OCI-LY7 (cell line): ENCODE measurements at regions of chr2 and their contacts with region 1.

Region 1: GRCh38 chr2:62334440-62335058 is 138.6 kb downstream of the B3GNT2 start:
- DNase-seq: no peak
- H3K4me3 ChIP-seq: no peak overlapping the region
- H3K27ac ChIP-seq: no peak overlapping the region
- H3K4me1 ChIP-seq: no peaks in the 10 kb centered on the region
- CTCF ChIP-seq: no peak

Region 2: GRCh38 chr2:61233581-61233980 is 1101.0 kb before region 1 on chr2:
- CTCF ChIA-PET with region 1: no interaction called
- POLR2A ChIA-PET with region 1: no interaction called
- intact Hi-C with region 1: no loop called
- DNase-seq: no peak
- H3K4me3 ChIP-seq: no peak overlapping the region
- H3K27ac ChIP-seq: no peak overlapping the region
- H3K4me1 ChIP-seq: no peaks in the 10 kb centered on the region
- CTCF ChIP-seq: no peak

Region 3: GRCh38 chr2:61943251-61943650 is 391.3 kb before region 1 on chr2:
- CTCF ChIA-PET with region 1: no interaction called
- POLR2A ChIA-PET with region 1: no interaction called
- intact Hi-C with region 1: no loop called
- DNase-seq: no peak
- H3K4me3 ChIP-seq: no peak overlapping the region
- H3K27ac ChIP-seq: no peak overlapping the region
- H3K4me1 ChIP-seq: no peaks in the 10 kb centered on the region
- CTCF ChIP-seq: no peak

Region 4: DNA sequence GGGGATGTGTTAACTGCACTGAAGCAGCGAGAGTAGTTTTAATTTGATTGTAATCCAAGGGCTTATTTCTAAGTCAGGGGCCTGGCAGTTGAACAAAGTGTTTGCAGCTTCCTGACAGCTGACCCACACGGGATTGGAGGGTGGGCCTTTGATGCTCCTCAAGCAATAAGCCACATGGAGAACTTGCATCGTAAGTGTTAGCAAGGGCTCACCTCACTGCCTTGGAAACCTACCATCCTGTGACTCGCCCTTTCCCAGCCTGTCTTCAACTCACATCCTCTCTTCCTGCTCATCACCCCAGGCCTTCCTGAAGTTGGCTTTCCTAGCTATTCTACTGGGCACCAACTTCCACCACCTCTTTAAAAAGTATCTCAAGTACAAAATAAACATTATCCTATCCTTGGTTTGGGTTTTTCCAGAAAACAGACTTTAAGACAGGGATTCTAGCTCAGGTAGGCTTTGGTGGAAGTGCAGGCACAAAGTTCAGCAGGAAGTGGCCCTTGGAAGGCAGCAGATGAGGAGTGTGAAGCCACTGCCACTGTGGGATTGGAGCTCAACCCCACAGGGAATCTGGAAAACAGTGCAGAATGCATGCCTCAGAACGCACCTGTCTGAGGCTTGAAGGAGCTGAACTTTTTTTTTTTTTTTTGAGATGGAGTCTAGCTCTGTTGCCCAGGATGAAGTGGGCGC is 107.0 kb before region 1 on chr2:
- CTCF ChIA-PET with region 1: no interaction called
- POLR2A ChIA-PET with region 1: no interaction called
- intact Hi-C with region 1: no loop called
- DNase-seq: no peak
- H3K4me3 ChIP-seq: no peak overlapping the region
- H3K27ac ChIP-seq: peak overlapping the region; percentile 58
- H3K4me1 ChIP-seq: peaks cover 29% of the 10 kb centered on the region
- CTCF ChIP-seq: no peak

Region 5: DNA sequence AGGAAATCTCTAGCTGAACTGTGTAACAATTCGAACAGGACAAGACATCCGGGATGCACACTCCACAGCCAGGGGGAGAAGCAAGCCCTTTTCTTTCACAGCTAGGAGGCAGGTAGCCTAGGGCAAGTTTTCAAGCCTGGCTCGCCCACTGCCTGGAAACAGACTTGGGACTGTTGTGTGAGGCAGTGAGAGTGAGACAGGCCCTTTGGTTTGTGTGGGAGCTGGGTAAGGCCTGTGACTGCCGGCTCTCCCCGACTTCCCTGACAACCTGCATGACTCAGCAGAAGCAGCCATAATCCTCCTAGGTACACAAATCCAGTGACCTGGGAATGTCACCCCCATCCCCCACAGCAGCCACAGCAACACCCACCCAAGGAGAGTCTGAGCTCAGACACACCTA is 1074.0 kb after region 1 on chr2:
- CTCF ChIA-PET with region 1: no interaction called
- POLR2A ChIA-PET with region 1: no interaction called
- intact Hi-C with region 1: loop called (anchors 5 kb)
- DNase-seq: no peak
- H3K4me3 ChIP-seq: no peak overlapping the region
- H3K27ac ChIP-seq: no peak overlapping the region
- H3K4me1 ChIP-seq: no peaks in the 10 kb centered on the region
- CTCF ChIP-seq: no peak